ENCODE measurements at regions of chr2 and their contacts with region 1.

Region 1: DNA sequence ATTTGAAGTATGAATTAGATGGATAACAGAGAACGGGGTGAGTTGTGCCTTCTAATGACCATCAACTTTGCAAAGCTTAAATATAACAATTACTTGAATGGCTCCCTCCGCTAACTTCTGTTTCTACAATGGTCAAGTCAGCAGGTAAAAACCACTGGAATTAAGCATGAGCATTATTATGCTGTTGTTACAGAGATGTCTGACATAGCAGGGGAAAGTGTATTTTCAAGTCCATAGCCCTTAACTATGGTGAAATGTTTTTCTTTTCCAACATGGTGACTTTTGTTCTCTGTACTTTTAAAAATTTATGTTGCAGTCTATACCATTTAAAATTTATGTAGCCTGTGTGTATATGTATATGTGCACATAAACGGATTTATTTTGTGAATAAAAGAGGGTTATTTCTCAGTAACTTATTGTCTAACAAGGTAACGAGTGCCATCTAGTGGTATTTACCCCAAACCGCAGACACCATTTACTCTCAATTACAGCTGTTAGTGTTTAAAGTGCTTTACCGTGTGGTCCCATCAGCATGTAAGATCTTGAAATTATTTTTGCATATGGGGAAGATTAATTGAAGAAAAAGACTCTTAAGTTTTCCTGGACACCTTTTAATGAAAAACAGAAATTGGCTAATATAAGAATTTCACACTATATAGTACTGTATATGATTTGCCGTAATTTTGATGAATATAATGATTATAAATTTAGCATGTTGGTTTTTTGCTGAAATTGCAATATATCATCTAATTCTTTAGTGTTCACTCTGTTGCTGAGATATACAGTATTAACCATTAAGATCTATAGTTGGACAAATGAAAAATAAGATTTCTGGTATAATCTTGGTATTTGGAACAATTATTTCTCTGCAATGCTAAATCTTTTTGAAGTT is 78.2 kb downstream of the UBE2E3 start:
- DNase-seq: peak; percentile 12
- ATAC-seq: peak; percentile 75
- H3K4me3 ChIP-seq: no peak overlapping the region
- H3K27ac ChIP-seq: no peak overlapping the region
- H3K4me1 ChIP-seq: no peaks in the 10 kb centered on the region
- H3K27me3 ChIP-seq: no peaks in the 10 kb centered on the region
- CTCF ChIP-seq: peak; percentile 66 to 75 (median 72)
- EP300 ChIP-seq: no peak
- POLR2A ChIP-seq: no peak
- RAD21 ChIP-seq: peak; percentile 91

Region 2: GRCh38 chr2:180125245-180125962 is 933.2 kb before region 1 on chr2:
- CTCF ChIA-PET with region 1: interaction called, 90 read pairs
- POLR2A ChIA-PET with region 1: no interaction called
- RAD21 ChIA-PET with region 1: interaction called, 21 read pairs
- SMC1A ChIA-PET with region 1: interaction called, 42 read pairs
- in situ Hi-C with region 1: loop called (anchors 5 kb)
- intact Hi-C with region 1: loop called (anchors 1 kb)
- DNase-seq: peak; percentile 12
- ATAC-seq: peak; percentile 90
- H3K4me3 ChIP-seq: no peak overlapping the region
- H3K27ac ChIP-seq: no peak overlapping the region
- H3K4me1 ChIP-seq: no peaks in the 10 kb centered on the region
- H3K27me3 ChIP-seq: no peaks in the 10 kb centered on the region; a peak in 1 of 4 replicates
- CTCF ChIP-seq: peak; percentile 45 to 59 (median 50); a peak in 5 of 6 replicates
- EP300 ChIP-seq: no peak
- POLR2A ChIP-seq: no peak
- RAD21 ChIP-seq: peak; percentile 58

Region 3: DNA sequence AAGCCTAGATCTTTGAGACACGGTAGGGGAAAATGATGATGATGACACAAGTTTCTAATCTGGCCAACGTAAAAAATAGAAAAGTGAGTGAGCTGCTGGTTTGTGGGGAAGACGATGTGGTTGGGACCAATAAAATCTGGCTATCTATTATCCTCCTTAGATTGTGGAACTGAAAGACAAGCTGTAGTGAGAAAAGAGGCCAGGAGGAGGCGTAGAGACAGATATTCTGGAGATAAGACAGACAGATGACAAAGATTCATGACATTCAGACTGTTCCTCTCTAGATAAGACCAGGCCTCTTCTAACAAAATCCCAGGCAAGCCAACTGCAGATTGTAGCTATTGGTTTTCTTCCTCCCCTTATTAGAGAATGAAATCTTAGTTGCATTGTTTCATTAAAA is 454.5 kb before region 1 on chr2:
- CTCF ChIA-PET with region 1: interaction called, 9 read pairs
- POLR2A ChIA-PET with region 1: no interaction called
- RAD21 ChIA-PET with region 1: no interaction called
- SMC1A ChIA-PET with region 1: interaction called, 4 read pairs
- in situ Hi-C with region 1: no loop called
- intact Hi-C with region 1: loop called (anchors 1 kb)
- DNase-seq: no peak
- ATAC-seq: peak; percentile 81
- H3K4me3 ChIP-seq: no peak overlapping the region
- H3K27ac ChIP-seq: no peak overlapping the region
- H3K4me1 ChIP-seq: no peaks in the 10 kb centered on the region
- H3K27me3 ChIP-seq: no peaks in the 10 kb centered on the region
- CTCF ChIP-seq: peak; percentile 31 to 47 (median 43); a peak in 5 of 6 replicates
- EP300 ChIP-seq: no peak
- POLR2A ChIP-seq: no peak
- RAD21 ChIP-seq: peak; percentile 35; the same call in 1 of the 2 replicates

Region 4: DNA sequence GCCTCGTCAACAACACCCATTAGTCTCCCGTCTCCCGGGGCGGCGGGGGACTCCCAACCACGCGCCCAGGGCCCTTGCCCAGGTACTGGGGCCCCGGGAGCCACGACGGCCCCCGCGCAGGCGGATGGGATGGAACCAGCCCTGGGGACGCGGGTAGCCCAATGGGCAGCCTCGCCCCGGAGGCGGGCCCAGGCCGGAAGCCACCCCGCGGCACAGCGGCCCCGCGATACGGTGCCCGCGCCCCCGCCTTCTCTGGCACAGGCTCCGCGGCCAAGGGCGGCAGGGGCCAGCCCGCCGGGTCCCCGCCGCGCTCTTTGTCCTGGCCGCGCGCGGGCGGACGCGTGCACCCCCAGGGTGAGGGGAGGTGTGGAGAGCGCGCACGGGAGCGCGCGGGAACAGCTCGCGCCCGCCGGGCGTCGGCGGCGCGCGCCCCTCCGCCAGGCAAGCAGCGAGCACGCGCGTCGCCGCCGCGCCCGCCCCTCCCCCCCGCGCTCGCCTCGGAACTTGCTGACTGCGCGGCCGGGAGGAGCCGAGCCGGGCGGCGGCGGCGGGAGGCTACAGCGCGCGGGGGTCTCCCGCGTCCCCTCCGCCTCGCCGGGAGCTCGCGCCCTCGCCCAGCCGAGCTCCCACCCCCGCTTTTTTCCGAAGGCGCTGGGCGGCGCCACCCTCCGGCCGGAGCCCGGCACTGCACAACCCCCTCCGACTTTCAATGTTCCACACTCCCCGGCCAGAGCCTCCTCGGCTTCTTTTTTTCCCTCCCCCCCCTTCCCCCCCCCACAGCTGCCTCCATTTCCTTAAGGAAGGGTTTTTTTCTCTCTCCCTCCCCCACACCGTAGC is 78.3 kb before region 1 on chr2 and contains the start of gene UBE2E3:
- CTCF ChIA-PET with region 1: interaction called, 17 read pairs
- POLR2A ChIA-PET with region 1: no interaction called
- RAD21 ChIA-PET with region 1: interaction called, 10 read pairs
- SMC1A ChIA-PET with region 1: interaction called, 11 read pairs
- in situ Hi-C with region 1: no loop called
- intact Hi-C with region 1: loop called (anchors 2 kb)
- DNase-seq: no peak
- ATAC-seq: peak; percentile 87
- H3K4me3 ChIP-seq: peak within 1 kb of the TSS; percentile 76
- H3K27ac ChIP-seq: 0 out of 2 replicates have a peak within 1 kb of the TSS, but pooled peaks have one; percentile 10
- H3K4me1 ChIP-seq: peaks cover 8% of the 10 kb centered on the region
- H3K27me3 ChIP-seq: no peaks in the 10 kb centered on the region; a peak in 1 of 4 replicates
- CTCF ChIP-seq: peak; percentile 55 to 82 (median 64)
- EP300 ChIP-seq: no peak
- POLR2A ChIP-seq: peak; percentile 70; the same call in 1 of the 2 replicates
- RAD21 ChIP-seq: peak; percentile 50
- polyA plus RNA-seq, gene UBE2E3: 14.9 to 22.7 TPM

Region 5: GRCh38 chr2:181025004-181025403 is 33.6 kb before region 1 on chr2:
- CTCF ChIA-PET with region 1: interaction called, 11 read pairs
- POLR2A ChIA-PET with region 1: no interaction called
- RAD21 ChIA-PET with region 1: no interaction called
- SMC1A ChIA-PET with region 1: interaction called, 4 read pairs
- in situ Hi-C with region 1: no loop called
- intact Hi-C with region 1: no loop called
- DNase-seq: no peak
- ATAC-seq: no peak
- H3K4me3 ChIP-seq: no peak overlapping the region
- H3K27ac ChIP-seq: no peak overlapping the region
- H3K4me1 ChIP-seq: no peaks in the 10 kb centered on the region
- H3K27me3 ChIP-seq: no peaks in the 10 kb centered on the region
- CTCF ChIP-seq: no peak
- EP300 ChIP-seq: no peak
- POLR2A ChIP-seq: no peak
- RAD21 ChIP-seq: no peak

Region 6: DNA sequence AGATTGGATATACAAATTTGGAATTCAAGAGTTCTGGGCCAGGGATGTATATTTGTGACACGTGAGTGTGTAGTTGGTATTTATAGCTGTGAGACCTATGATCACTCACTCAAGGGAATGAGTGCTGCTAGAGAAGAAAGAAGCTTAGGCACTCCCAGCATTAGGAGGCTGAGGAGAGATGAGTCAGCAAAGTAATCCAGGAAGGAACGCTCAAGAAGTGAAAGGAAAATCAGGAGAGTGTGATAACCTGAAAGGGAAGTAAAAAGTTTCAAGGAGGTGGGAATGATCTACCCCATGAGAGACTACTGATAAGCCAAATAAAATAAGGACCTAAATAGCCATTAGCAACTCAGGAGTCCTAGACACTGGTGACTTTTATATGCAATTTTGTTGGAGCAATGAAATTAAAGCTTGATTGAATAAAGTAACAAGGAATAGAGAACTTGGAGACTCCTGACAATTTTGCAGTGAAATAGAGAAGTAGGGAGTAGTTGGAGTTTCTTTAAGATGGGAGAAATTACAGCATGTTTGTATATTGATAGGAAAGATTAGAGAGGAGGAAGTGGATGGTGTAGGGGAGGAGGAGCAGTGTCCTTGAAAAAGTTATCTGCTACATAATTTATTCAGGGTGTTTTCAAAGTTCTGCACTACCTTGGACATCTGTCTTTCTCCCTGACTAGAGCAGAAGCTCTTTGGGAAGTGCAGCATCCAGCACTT is 11.7 kb after region 1 on chr2:
- CTCF ChIA-PET with region 1: interaction called, 14 read pairs
- POLR2A ChIA-PET with region 1: no interaction called
- RAD21 ChIA-PET with region 1: interaction called, 3 read pairs
- SMC1A ChIA-PET with region 1: interaction called, 6 read pairs
- in situ Hi-C with region 1: no loop called
- intact Hi-C with region 1: no loop called
- DNase-seq: no peak
- ATAC-seq: no peak
- H3K4me3 ChIP-seq: no peak overlapping the region
- H3K27ac ChIP-seq: no peak overlapping the region
- H3K4me1 ChIP-seq: no peaks in the 10 kb centered on the region
- H3K27me3 ChIP-seq: no peaks in the 10 kb centered on the region
- CTCF ChIP-seq: no peak
- EP300 ChIP-seq: no peak
- POLR2A ChIP-seq: no peak
- RAD21 ChIP-seq: no peak

Measured in GM12878 (cell line).